SK-N-SH (cell line): ENCODE measurements at regions of chr6 and their contacts with region 1.

Region 1: DNA sequence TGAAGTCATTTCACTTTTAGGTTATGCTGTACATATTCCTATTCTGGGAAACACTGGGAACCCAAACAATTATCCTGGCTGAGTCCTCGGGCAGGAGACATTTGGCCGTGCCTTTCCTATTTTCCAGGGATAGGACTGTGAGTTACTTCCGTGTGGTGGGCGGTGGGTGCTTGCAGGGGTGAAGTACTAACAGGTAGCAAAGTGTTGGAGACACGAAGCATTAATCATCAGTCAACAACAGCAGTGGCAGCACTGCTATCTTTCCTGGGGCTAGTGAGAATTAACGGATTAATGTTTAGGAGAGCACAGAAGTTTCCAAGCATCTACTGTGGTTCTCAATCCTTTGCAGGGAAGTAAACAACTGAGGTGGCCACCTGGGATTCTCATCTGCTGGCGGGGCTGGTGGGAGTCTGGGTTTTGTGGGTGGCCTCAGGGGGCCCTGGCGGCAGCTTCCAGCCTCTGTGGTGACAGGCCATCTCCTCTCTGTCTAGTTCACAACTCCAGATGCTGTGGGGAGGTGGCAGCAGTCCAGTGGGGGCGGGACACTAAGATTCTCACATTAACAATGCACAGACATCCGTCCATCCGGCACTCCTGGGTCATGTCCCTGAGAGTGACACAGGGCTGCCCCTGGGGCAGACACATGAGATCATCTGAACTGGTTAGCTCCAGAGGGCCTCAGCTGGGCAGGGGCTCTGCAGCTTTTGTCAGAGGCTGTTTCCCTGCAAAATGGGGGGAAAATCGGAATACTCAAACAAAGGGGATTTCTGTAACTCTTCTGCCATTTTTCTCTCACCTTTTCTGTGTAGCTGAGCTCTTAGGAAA is 90.9 kb downstream of the GJA10 start:
- DNase-seq: peak; percentile 83
- H3K4me3 ChIP-seq: no peak overlapping the region
- H3K27ac ChIP-seq: peak overlapping the region; percentile 91 to 99
- H3K4me1 ChIP-seq: peaks cover 28 to 40% of the 10 kb centered on the region in 2 experiments
- H3K27me3 ChIP-seq: no peaks in the 10 kb centered on the region
- CTCF ChIP-seq: no peak
- EP300 ChIP-seq: peak; percentile 37 to 99; a peak in 3 of 4 replicates
- RAD21 ChIP-seq: peak; percentile 25; the same call in 1 of the 2 replicates

Region 2: GRCh38 chr6:89887452-89888137 is 97.5 kb before region 1 on chr6:
- CTCF ChIA-PET with region 1: no interaction called
- POLR2A ChIA-PET with region 1: no interaction called
- DNase-seq: peak; percentile 21
- H3K4me3 ChIP-seq: no peak overlapping the region
- H3K27ac ChIP-seq: no peak overlapping the region
- H3K4me1 ChIP-seq: no peaks in the 10 kb centered on the region
- H3K27me3 ChIP-seq: no peaks in the 10 kb centered on the region
- CTCF ChIP-seq: no peak
- EP300 ChIP-seq: no peak
- RAD21 ChIP-seq: no peak

Region 3: GRCh38 chr6:89956182-89956581 is 29.0 kb before region 1 on chr6:
- CTCF ChIA-PET with region 1: no interaction called
- POLR2A ChIA-PET with region 1: no interaction called
- DNase-seq: no peak
- H3K4me3 ChIP-seq: no peak overlapping the region
- H3K27ac ChIP-seq: no peak overlapping the region
- H3K4me1 ChIP-seq: peaks cover 0 to 20% of the 10 kb centered on the region in 2 experiments; a peak in 2 of 4 replicates
- H3K27me3 ChIP-seq: no peaks in the 10 kb centered on the region
- CTCF ChIP-seq: no peak
- EP300 ChIP-seq: no peak
- RAD21 ChIP-seq: no peak

Region 4: DNA sequence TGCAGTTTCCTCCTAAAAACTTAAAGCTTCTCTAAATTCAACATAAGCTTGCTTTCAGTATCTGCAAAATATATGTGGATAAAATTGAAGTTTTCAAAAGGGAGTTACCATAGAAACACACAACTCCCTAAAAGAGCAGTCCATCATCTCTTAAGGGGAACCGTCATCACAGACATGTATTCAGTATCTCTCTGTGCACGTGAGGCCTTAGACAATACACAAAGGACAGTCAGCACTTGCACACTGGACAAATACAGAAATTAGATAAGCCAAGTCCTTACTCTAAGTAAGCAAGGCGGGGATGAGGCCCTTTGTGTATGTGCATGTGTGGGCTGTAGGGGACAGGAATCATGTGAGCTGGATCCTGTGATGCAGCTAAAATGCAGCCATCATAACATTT is 174.9 kb after region 1 on chr6:
- CTCF ChIA-PET with region 1: no interaction called
- POLR2A ChIA-PET with region 1: interaction called, 11 read pairs
- DNase-seq: peak; percentile 23
- H3K4me3 ChIP-seq: no peak overlapping the region
- H3K27ac ChIP-seq: peak overlapping the region in 1 of 2 experiments; percentile 94; a peak in 2 of 4 replicates
- H3K4me1 ChIP-seq: peaks cover 0 to 22% of the 10 kb centered on the region in 2 experiments; a peak in 3 of 4 replicates
- H3K27me3 ChIP-seq: no peaks in the 10 kb centered on the region
- CTCF ChIP-seq: no peak
- EP300 ChIP-seq: no peak
- RAD21 ChIP-seq: no peak

Region 5: DNA sequence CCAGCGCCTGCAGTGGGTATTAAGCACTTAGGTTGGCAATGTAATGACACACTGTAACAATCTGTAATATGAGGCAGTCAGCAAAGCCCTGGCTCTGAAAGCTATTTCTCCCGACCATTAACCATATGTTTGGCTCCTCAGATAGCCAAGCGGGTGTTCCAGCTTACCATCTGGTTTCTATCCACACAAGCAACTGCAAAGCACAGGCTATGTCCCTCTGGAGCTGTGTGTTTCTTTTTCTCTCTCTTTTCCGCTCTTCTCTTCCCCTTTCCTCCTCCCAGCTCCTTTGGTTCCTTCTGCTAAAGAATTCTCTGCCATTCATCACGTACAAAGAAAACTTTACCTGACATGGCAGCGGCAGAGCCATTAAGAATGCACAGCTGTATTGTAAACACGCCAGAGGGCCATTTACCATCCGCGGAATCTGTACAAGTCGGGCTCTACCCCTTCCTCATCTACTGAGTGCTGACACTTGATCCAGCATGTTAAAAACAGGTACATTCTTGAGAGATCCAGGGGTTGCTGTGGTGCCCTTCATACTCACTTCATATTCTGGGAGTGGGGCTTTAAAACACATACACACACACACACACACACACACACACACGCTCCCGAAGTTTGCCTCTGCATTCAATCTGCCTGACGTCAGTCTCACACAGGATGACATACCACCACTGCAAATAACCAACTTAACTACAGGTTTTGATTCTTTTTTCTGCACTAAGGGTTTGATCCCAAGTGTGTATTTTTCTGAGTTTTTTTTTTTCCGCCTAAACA is 234.3 kb after region 1 on chr6:
- CTCF ChIA-PET with region 1: interaction called, 5 read pairs
- POLR2A ChIA-PET with region 1: interaction called, 12 read pairs
- DNase-seq: peak; percentile 64
- H3K4me3 ChIP-seq: peak overlapping the region; percentile 36 to 48
- H3K27ac ChIP-seq: peak overlapping the region; percentile 96 to 97
- H3K4me1 ChIP-seq: peaks cover 34 to 45% of the 10 kb centered on the region in 2 experiments; a peak in 3 of 4 replicates
- H3K27me3 ChIP-seq: no peaks in the 10 kb centered on the region
- CTCF ChIP-seq: no peak
- EP300 ChIP-seq: peak; percentile 26 to 76; a peak in 3 of 4 replicates
- RAD21 ChIP-seq: peak; percentile 17; the same call in 1 of the 2 replicates

Region 6: GRCh38 chr6:90296346-90297114 is 311.4 kb after region 1 on chr6 and contains the start of gene BACH2:
- CTCF ChIA-PET with region 1: interaction called, 5 read pairs
- POLR2A ChIA-PET with region 1: interaction called, 11 read pairs
- DNase-seq: peak; percentile 88
- H3K4me3 ChIP-seq: peak within 1 kb of the TSS; percentile 59 to 63
- H3K27ac ChIP-seq: peak within 1 kb of the TSS in 1 of 2 experiments; percentile 69; a peak in 1 of 4 replicates
- H3K4me1 ChIP-seq: peaks cover 0 to 30% of the 10 kb centered on the region in 2 experiments; a peak in 2 of 4 replicates
- H3K27me3 ChIP-seq: peaks cover 29% of the 10 kb centered on the region
- CTCF ChIP-seq: no peak
- EP300 ChIP-seq: no peak
- RAD21 ChIP-seq: no peak
- polyA plus RNA-seq, gene BACH2: 0.46 and 0.50 TPM in 2 replicates